WTC11 (cell line): ENCODE measurements at regions of chr2 and their contacts with region 1.

Region 1: GRCh38 chr2:219218732-219219701 is at the start of gene ABCB6:
- DNase-seq: peak; percentile 92
- ATAC-seq: peak; percentile 74
- H3K4me3 Mint-ChIP-seq: peak within 1 kb of the TSS; percentile 85
- H3K27ac Mint-ChIP-seq: peak within 1 kb of the TSS; percentile 79
- H3K4me1 Mint-ChIP-seq: peaks cover 25% of the 10 kb centered on the region
- H3K27me3 Mint-ChIP-seq: no peaks in the 10 kb centered on the region
- CTCF ChIP-seq: no peak
- total RNA-seq, gene ABCB6: 42.1 to 45.3 TPM (median 44.8 TPM) in 3 replicates

Region 2: GRCh38 chr2:219206442-219207253 is 12.4 kb before region 1 on chr2 and contains the start of gene ZFAND2B:
- CTCF ChIA-PET with region 1: interaction called, 7 read pairs
- POLR2A ChIA-PET with region 1: interaction called, 16 read pairs
- DNase-seq: peak; percentile 93
- ATAC-seq: peak; percentile 96
- H3K4me3 Mint-ChIP-seq: peak within 1 kb of the TSS; percentile 74
- H3K27ac Mint-ChIP-seq: peak within 1 kb of the TSS; percentile 91
- H3K4me1 Mint-ChIP-seq: peaks cover 6% of the 10 kb centered on the region
- H3K27me3 Mint-ChIP-seq: peaks cover 15% of the 10 kb centered on the region
- CTCF ChIP-seq: no peak
- total RNA-seq, gene ZFAND2B: 19.5 to 21.1 TPM (median 20.2 TPM) in 3 replicates

Region 3: DNA sequence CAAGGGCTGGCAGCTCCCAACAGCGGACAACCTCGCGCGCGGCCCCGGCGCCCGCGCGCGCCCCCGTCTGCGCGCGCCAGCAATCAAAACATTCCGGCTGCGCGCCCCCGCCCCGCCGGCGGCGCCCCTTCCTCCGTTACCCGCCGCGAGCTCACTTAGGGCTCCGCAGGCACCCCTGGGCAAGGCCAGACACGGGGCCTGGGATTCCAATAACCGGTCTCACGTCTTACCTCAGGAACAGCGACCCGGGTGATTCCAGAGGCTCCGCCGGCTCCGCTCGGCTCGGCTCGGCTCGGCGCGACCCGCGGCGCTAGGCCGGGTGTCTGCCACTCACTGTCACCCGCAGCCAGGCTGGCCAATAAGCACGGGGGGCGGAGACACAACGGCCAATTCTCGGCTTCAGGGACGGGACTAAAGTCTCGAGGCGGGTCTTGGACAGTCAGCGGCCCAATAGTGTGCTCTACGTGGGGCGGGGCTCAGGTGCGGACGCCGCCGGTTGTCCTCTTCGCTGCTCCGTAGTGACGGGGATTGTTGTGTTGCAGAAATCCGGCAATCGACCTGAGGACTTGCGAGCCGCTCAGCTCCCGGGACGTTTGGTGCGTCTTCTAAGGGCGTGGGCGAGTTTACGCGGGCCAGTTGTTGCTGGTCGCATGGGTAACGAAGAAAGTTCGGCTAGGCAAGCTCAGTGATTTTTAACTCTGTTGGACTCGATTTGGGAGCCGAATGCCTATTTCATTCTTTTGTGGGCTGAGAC is 10.5 kb after region 1 on chr2 and contains the starts of genes ANKZF1 and ATG9A:
- CTCF ChIA-PET with region 1: interaction called, 8 read pairs
- POLR2A ChIA-PET with region 1: interaction called, 18 read pairs
- DNase-seq: peak; percentile 99
- ATAC-seq: peak; percentile 98
- H3K4me3 Mint-ChIP-seq: peak within 1 kb of the TSS; percentile 93
- H3K27ac Mint-ChIP-seq: peak within 1 kb of the TSS; percentile 97
- H3K4me1 Mint-ChIP-seq: peaks cover 12% of the 10 kb centered on the region
- H3K27me3 Mint-ChIP-seq: no peaks in the 10 kb centered on the region
- CTCF ChIP-seq: no peak
- total RNA-seq, gene ANKZF1: 56.9 to 70.4 TPM (median 58.0 TPM) in 3 replicates
- total RNA-seq, gene ATG9A: 42.9 to 48.4 TPM (median 46.7 TPM) in 3 replicates

Region 4: DNA sequence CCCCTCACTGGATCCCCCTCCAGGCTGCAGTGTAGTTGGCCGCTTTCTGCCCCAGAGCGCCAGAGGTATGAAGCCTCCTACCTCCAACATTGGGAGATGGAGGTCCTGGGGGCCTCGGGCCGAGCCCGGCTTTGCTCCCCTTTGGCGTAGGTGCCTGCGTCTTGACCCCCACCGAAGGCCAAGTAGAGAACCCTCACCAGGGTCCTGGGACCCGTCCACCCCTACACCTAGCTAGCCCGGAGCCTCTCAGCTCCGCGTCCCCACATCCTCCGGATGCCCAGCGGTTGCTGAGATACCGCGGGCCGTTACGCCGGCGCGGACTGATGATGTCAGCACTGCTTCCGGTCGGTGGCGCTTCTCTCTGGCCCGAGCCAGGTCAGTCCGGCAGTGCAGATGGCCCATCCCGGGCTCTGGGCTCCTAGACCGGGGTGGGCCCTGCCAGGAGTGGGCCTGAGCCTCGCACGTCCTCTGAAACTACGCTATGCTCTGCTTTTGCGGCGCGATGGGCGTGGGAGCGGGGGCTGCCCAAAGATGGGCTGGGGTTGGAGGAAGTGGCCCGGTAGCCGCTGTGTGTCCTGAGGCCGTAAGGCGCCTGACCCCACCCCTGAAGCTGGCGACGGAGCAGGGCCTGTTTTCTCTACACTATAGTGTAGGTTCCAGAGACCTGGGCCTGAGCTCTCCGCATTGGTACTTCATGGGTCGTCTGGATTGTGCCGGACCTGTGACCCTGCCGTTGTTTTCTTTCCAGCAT is 26.3 kb after region 1 on chr2 and contains the starts of genes GLB1L and STK16:
- CTCF ChIA-PET with region 1: no interaction called
- POLR2A ChIA-PET with region 1: interaction called, 11 read pairs
- DNase-seq: peak; percentile 96
- ATAC-seq: peak; percentile 84
- H3K4me3 Mint-ChIP-seq: peak within 1 kb of the TSS; percentile 93
- H3K27ac Mint-ChIP-seq: peak within 1 kb of the TSS; percentile 96
- H3K4me1 Mint-ChIP-seq: peaks cover 22% of the 10 kb centered on the region
- H3K27me3 Mint-ChIP-seq: no peaks in the 10 kb centered on the region
- CTCF ChIP-seq: no peak
- total RNA-seq, gene GLB1L: 5.2 to 6.4 TPM (median 6.1 TPM) in 3 replicates
- total RNA-seq, gene STK16: 27.4 to 28.8 TPM (median 27.5 TPM) in 3 replicates

Region 5: GRCh38 chr2:219253753-219254590 is 35.0 kb after region 1 on chr2 and contains the start of gene TUBA4A:
- CTCF ChIA-PET with region 1: interaction called, 6 read pairs
- POLR2A ChIA-PET with region 1: interaction called, 11 read pairs
- DNase-seq: peak; percentile 85
- ATAC-seq: peak; percentile 81
- H3K4me3 Mint-ChIP-seq: peak within 1 kb of the TSS; percentile 79
- H3K27ac Mint-ChIP-seq: peak within 1 kb of the TSS; percentile 41; the same call in 1 of the 2 replicates
- H3K4me1 Mint-ChIP-seq: peaks cover 25% of the 10 kb centered on the region
- H3K27me3 Mint-ChIP-seq: peaks cover 69% of the 10 kb centered on the region
- CTCF ChIP-seq: no peak
- total RNA-seq, gene TUBA4A: 40.8 to 58.7 TPM (median 52.3 TPM) in 3 replicates